ENCODE measurements at regions of chr1 and their contacts with region 1.

Region 1: DNA sequence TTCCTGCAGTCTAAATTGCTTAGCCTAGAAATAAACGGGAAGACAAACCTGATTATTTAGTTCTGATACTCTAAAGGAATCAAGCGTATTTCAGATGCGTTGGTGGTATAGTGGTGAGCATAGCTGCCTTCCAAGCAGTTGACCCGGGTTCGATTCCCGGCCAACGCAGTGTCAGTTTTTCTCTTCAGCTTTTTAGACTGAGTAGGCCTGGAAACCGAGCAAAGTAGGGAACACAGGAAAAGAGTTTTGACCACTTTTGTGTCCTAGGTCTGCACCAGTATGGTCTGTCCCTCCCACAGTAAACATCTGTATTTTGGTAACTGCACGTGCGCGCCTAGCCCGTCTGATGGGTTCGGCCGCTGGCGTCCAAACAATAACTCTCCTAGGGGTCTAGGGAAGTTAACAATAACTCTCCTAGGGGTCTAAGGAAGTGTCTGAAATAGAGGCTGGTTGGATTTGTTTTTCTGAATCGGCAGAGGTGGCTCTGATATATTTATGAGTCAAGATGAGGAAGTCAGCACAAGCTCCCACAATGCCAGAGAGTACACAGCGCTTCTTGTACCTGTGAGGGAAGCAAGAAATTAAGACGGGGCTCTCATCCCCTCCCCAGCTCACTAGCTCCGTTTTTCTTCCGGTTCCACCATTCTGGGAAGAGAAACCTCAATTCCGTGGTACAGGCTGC is 15.6 kb upstream of the HJV start:
- DNase-seq: peak; percentile 51 to 87 (median 70)
- ATAC-seq: peak; percentile 54
- H3K4me3 ChIP-seq: peak overlapping the region; percentile 72 to 94
- H3K4me3 Mint-ChIP-seq: peak overlapping the region; percentile 97
- H3K27ac ChIP-seq: peak overlapping the region; percentile 60 to 63
- H3K27ac Mint-ChIP-seq: peak overlapping the region; percentile 95
- H3K4me1 ChIP-seq: peaks cover 14% of the 10 kb centered on the region
- H3K4me1 Mint-ChIP-seq: peaks cover 29% of the 10 kb centered on the region
- H3K27me3 ChIP-seq: no peaks in the 10 kb centered on the region
- H3K27me3 Mint-ChIP-seq: no peaks in the 10 kb centered on the region
- CTCF ChIP-seq: no peak

Region 2: DNA sequence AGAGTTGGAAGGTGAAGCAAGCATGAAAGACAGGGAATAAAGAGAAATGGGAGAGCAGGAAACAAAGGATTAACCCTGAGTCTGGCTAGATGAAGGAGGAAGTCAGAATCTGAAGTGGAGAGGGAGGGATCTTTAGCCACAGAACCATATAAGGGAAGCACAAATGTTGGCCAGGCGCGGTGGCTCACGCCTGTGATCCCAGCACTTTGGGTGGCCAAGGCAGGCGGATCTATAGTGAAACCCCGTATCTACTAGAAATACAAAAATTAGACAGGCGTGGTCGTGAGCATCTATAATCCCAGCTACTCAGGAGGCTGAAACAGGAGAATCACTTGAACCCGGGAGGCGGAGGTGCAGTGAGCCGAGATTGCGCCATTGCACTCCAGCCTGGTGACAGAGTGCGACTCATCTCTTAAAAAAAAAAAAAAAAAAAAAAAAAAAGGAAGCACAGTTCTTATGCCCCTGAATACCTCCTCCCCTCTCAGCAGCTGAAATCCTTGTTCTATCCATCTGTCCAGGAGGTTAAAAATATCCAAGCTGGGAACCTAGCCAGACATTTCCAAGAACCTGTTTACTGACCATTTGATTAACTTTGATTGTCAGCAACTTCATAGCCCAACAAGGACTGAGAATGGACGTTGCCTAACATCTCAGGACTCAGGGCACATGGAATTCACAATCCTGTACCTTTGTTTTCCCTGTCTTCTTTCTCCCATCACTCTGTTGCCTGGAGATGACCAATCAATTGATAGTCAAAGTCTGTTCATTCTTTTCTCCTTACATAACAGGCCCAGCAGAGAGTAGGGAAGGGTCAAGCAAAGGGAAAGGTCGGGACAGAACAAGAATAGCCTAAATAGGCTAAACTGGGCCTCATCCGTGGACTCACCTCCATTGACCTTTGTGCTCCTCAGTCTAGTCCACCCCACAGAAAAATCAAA is 51.3 kb before region 1 on chr1:
- CTCF ChIA-PET with region 1: interaction called, 3 read pairs
- POLR2A ChIA-PET with region 1: interaction called, 13 read pairs
- intact Hi-C with region 1: no loop called
- DNase-seq: peak in 1 of 9 experiments; percentile 26
- ATAC-seq: no peak
- H3K4me3 ChIP-seq: peak overlapping the region in 1 of 2 experiments; percentile 8
- H3K4me3 Mint-ChIP-seq: peak overlapping the region; percentile 5
- H3K27ac ChIP-seq: peak overlapping the region in 1 of 2 experiments; percentile 34
- H3K27ac Mint-ChIP-seq: peak overlapping the region; percentile 91
- H3K4me1 ChIP-seq: peaks cover 76% of the 10 kb centered on the region
- H3K4me1 Mint-ChIP-seq: peaks cover 61% of the 10 kb centered on the region
- H3K27me3 ChIP-seq: no peaks in the 10 kb centered on the region
- H3K27me3 Mint-ChIP-seq: no peaks in the 10 kb centered on the region
- CTCF ChIP-seq: no peak

Region 3: DNA sequence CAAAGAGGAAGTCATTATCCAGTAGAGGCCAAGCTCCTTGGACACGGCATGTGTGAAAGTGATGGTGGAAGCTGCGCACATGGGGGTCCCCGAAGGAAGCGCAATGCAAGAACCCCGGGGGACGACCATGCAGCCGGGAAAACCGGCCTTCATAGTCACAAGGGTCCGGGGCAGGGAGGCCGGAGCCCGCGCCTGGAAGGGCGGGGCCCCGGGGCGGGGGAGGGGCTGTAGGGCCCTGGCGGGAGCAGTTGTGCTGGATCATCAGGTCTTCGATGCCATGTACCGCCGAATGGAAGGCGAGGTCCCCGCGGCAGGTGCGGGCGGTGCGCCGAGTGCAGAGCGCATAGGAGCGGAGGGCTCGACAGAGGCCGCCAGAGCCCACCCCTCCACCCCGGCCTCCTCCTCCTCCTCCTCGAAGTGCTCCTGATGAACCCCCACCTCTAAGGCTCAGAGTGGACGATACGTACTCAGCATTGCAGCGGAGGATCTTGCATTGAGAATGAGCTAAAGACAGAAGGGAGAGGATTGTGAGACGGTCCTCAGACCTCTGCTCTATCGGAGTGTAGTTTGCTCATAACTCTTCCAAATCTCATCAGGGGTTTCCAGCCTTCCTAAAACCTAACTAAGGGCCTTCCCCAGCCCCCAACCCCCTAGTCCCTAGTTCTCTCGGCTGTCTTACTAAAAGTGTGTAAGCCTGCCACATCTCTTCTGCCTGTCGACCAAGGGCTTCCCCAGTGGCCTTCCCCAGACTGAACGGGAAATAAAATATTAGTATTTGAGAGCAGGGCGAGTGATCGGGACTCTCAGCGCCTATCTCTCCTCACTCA is 17.7 kb before region 1 on chr1:
- CTCF ChIA-PET with region 1: interaction called, 11 read pairs
- POLR2A ChIA-PET with region 1: interaction called, 3 read pairs
- intact Hi-C with region 1: no loop called
- DNase-seq: peak in 1 of 9 experiments; percentile 45
- ATAC-seq: peak; percentile 20
- H3K4me3 ChIP-seq: no peak overlapping the region
- H3K4me3 Mint-ChIP-seq: peak overlapping the region; percentile 37
- H3K27ac ChIP-seq: no peak overlapping the region
- H3K27ac Mint-ChIP-seq: no peak overlapping the region
- H3K4me1 ChIP-seq: no peaks in the 10 kb centered on the region
- H3K4me1 Mint-ChIP-seq: peaks cover 9% of the 10 kb centered on the region
- H3K27me3 ChIP-seq: peaks cover 10 to 14% of the 10 kb centered on the region in 2 experiments
- H3K27me3 Mint-ChIP-seq: peaks cover 38% of the 10 kb centered on the region
- CTCF ChIP-seq: no peak

Region 4: GRCh38 chr1:146049436-146049835 is 12.3 kb after region 1 on chr1:
- CTCF ChIA-PET with region 1: interaction called, 13 read pairs
- POLR2A ChIA-PET with region 1: interaction called, 72 read pairs
- intact Hi-C with region 1: loop called (anchors 1 kb)
- DNase-seq: peak in 2 of 9 experiments; percentile 23 to 52
- ATAC-seq: no peak
- H3K4me3 ChIP-seq: no peak overlapping the region
- H3K4me3 Mint-ChIP-seq: no peak overlapping the region
- H3K27ac ChIP-seq: no peak overlapping the region
- H3K27ac Mint-ChIP-seq: peak overlapping the region; percentile 49
- H3K4me1 ChIP-seq: no peaks in the 10 kb centered on the region
- H3K4me1 Mint-ChIP-seq: peaks cover 28% of the 10 kb centered on the region
- H3K27me3 ChIP-seq: no peaks in the 10 kb centered on the region
- H3K27me3 Mint-ChIP-seq: no peaks in the 10 kb centered on the region
- CTCF ChIP-seq: no peak